ENCODE measurements at regions of chrX and their contacts with region 1.

Region 1: DNA sequence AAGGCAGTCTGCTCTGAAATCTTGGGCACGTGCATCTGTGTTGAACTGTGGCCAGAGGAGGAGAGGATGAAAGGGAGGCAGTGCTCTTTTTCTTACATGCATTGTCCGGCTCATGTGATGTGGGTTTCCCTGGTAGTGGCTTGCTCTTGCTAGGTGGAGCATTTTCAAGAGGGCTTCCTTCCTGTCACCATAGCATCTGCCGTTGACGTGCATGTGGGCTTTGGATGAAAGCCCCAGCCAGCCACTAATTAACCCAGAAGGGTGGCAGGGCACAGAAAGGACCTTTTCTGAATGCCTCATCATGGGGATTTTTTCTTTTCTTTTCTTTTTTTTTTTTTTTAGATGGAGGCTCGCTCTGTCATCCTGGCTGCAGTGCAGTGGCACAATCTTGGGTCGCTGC is 121.3 kb downstream of the GPR143 start:
- DNase-seq: peak; percentile 67
- H3K4me3 Mint-ChIP-seq: no peak overlapping the region
- H3K27ac Mint-ChIP-seq: no peak overlapping the region
- H3K4me1 Mint-ChIP-seq: peaks cover 23% of the 10 kb centered on the region
- H3K27me3 Mint-ChIP-seq: no peaks in the 10 kb centered on the region

Region 2: DNA sequence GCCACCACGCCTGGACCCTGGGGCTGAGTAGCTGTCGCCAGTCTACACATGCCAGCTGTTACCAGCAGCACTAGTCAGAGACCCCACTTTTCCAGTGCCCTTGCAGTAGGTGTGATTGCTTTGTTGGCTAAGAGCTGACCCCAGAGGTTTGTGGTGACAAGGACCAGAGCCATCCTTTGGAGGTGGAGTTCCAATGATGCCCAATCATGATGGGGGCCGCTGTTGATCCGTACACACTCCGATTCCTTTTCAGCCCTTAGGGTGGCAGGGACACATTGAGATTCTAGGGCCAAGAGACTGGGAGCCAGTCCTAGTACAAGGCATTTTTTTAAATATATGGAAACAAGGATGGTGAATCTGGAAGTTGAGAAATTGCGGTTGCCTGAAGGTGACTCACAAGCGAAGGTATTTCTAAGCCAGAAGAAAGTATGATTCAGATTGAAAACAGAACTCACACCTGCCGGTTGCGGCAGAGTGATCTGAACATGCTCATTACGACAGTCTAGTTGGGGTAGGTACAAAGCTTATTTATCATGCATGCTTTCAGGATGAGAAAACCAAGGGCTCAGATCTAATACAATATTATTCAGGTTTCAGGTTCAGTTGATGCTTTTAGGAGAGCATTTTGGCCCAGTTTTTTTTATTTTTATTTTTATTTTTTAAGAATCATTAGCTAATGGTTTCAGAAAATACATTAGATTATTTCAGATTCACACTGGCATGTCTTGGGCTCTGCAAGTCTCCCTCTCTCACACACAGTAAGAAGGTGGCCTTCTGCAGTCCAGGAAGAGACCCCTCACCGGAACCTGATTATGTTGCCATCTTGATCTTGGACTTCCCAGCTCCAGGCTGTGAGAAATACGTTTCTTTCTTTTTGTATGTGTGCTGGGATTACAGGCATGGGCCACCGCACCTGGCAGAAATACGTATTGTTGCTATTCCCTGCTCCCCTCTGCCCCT is 185.3 kb after region 1 on chrX:
- CTCF ChIA-PET with region 1: no interaction called
- POLR2A ChIA-PET with region 1: no interaction called
- intact Hi-C with region 1: loop called (anchors 5 kb)
- DNase-seq: peak; percentile 68
- H3K4me3 Mint-ChIP-seq: no peak overlapping the region
- H3K27ac Mint-ChIP-seq: no peak overlapping the region
- H3K4me1 Mint-ChIP-seq: peaks cover 9% of the 10 kb centered on the region
- H3K27me3 Mint-ChIP-seq: peaks cover 38% of the 10 kb centered on the region